ENCODE measurements at regions of chr2 and their contacts with region 1.

Region 1: GRCh38 chr2:26970244-26970920 is at the start of gene MAPRE3:
- DNase-seq: peak; percentile 60 to 78
- ATAC-seq: peak; percentile 73 to 75
- H3K4me3 ChIP-seq: peak within 1 kb of the TSS; percentile 67 to 87 (median 79)
- H3K27ac ChIP-seq: peak within 1 kb of the TSS; percentile 94 to 97 (median 96)
- H3K4me1 ChIP-seq: peaks cover 37 to 41% of the 10 kb centered on the region in 2 donors
- H3K27me3 ChIP-seq: no peaks in the 10 kb centered on the region
- CTCF ChIP-seq: no peak
- POLR2A ChIP-seq: peak; percentile 92
- total RNA-seq, gene MAPRE3: 41.9 to 66.5 (median 53.9) TPM

Region 2: DNA sequence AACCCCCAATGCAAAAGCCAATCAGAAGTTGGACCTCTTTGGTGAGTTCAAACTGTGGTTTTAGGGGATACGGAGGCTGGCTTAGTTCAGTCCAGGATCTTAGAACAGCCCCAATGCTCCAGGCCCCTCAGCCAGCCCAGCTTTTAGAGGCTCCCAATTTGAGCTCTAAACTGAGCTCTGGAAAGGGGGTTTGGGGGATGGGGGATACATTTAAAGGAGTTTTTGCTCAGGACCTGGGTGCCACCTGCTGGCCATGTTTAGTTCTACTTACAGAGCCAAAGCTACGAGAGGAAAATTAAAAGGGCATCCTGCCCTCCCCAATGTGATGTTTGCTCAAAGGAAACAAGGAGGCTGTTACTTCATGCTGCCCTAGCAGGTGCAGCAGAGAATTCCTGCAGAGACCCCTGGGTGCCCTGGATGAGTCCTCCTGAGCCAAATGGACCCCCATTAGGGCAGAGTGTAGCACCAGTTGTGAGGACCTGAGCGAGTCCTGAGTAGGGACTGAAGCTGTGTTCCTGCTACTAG is 46.5 kb after region 1 on chr2:
- in situ Hi-C with region 1: loop called in 1 of 4 experiments (anchors 5 kb)
- intact Hi-C with region 1: loop called (anchors 2 kb)
- DNase-seq: peak in 1 of 2 donors; percentile 47
- ATAC-seq: peak; percentile 26 to 52
- H3K4me3 ChIP-seq: no peak overlapping the region
- H3K27ac ChIP-seq: peak overlapping the region; percentile 65 to 81 (median 70)
- H3K4me1 ChIP-seq: peaks cover 62 to 96% of the 10 kb centered on the region in 2 donors
- H3K27me3 ChIP-seq: no peaks in the 10 kb centered on the region
- CTCF ChIP-seq: peak; percentile 72 to 89 (median 73)
- POLR2A ChIP-seq: no peak

Region 3: GRCh38 chr2:27191053-27191829 is 220.9 kb after region 1 on chr2:
- in situ Hi-C with region 1: loop called in 1 of 4 experiments (anchors 25 kb)
- intact Hi-C with region 1: no loop called
- DNase-seq: peak in 1 of 2 donors; percentile 36
- ATAC-seq: peak; percentile 80 to 82
- H3K4me3 ChIP-seq: no peak overlapping the region
- H3K27ac ChIP-seq: no peak overlapping the region
- H3K4me1 ChIP-seq: peaks cover under 1 to 15% of the 10 kb centered on the region in 2 donors
- H3K27me3 ChIP-seq: no peaks in the 10 kb centered on the region
- CTCF ChIP-seq: peak; percentile 43 to 74 (median 66)
- POLR2A ChIP-seq: no peak

Region 4: GRCh38 chr2:27217217-27218121 is 247.1 kb after region 1 on chr2 and contains the start of gene CAD:
- in situ Hi-C with region 1: loop called in 1 of 4 experiments (anchors 25 kb)
- intact Hi-C with region 1: no loop called
- DNase-seq: peak; percentile 72 to 76
- ATAC-seq: peak; percentile 63
- H3K4me3 ChIP-seq: peak within 1 kb of the TSS; percentile 57 to 65 (median 63)
- H3K27ac ChIP-seq: peak within 1 kb of the TSS; percentile 73 to 77 (median 74)
- H3K4me1 ChIP-seq: peaks cover 11 to 21% of the 10 kb centered on the region in 2 donors
- H3K27me3 ChIP-seq: no peaks in the 10 kb centered on the region
- CTCF ChIP-seq: peak in 4 of 5 experiments; percentile 10 to 34 (median 31)
- POLR2A ChIP-seq: no peak
- total RNA-seq, gene CAD: 2.7 to 10.2 (median 7.1) TPM

Region 5: DNA sequence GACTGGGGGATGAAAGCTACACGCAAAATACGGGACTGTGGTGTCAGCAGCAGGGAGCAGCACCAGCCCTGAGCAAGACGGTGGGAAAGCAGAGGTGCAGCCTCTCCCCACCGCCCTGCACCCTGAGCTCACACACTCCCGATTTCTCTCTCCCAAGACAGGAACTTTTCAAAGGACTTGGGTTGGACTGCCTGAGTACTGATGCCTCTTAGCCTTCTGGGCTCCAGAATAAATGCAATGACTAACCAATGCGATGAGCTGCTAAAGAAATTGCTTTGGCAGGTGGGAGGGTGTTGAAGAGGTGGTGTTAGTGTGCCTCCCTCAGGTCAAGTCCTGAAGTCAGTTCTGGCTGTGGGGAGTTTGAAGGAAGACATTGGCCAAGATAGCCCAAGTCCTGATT is 321.5 kb after region 1 on chr2:
- in situ Hi-C with region 1: loop called in 3 of 4 experiments (anchors 10 to 25 kb)
- intact Hi-C with region 1: no loop called
- DNase-seq: peak in 1 of 2 donors; percentile 67
- ATAC-seq: peak; percentile 66 to 82
- H3K4me3 ChIP-seq: peak overlapping the region; percentile 42 to 84 (median 66)
- H3K27ac ChIP-seq: peak overlapping the region; percentile 88 to 99 (median 98)
- H3K4me1 ChIP-seq: peaks cover 88 to 97% of the 10 kb centered on the region in 2 donors
- H3K27me3 ChIP-seq: no peaks in the 10 kb centered on the region
- CTCF ChIP-seq: peak in 3 of 5 experiments; percentile 11 to 50 (median 16)
- POLR2A ChIP-seq: peak in 1 of 2 donors; percentile 59

Region 6: DNA sequence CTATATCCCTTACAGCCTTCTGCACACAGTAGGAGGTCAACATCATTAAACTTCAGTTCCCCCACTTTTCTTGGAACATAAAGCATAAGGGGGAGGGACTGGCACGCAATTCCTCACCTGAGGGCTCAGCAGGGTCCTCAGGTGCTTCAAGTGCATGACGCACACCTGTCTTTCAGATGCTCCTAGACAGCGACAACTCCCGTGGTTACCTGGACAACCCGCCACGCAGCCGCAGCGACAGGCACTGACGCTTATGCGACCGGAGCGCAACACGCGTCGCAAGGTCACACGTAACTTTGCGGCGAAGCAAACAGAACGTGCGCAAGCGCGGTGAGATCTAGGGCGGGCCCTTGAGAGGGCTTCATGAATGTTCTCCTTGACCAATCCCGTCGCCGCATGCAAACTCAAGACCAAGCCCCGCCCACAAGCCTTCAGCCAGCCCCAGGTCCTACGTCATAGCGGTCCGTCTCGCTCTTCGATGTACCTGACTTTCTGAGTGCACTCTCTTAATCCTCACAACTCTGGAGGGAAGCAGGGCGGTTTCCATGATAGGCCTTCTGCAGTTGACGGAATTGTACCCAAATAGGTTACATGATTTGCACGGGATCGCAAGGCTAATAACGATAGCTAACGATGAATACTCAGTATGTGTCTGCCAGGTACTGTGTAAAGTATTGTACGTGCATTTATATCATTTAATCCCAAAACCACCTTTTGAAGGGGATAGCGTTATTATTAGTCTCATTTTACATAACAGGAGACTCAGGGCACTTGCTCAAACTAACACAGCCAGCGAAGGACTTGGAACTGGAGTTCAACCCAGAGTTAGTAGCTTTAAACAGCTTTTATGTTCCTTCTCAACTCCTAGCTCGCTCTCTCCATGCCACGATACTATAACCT is 519.4 kb after region 1 on chr2 and contains the start of gene IFT172:
- in situ Hi-C with region 1: no loop called
- intact Hi-C with region 1: no loop called
- DNase-seq: peak; percentile 99
- ATAC-seq: peak; percentile 99
- H3K4me3 ChIP-seq: peak within 1 kb of the TSS; percentile 69 to 83 (median 77)
- H3K27ac ChIP-seq: peak within 1 kb of the TSS; percentile 75 to 85 (median 83)
- H3K4me1 ChIP-seq: peaks cover 13 to 25% of the 10 kb centered on the region in 2 donors
- H3K27me3 ChIP-seq: peaks cover 0 to 7% (median 0%) of the 10 kb centered on the region in 3 donors
- CTCF ChIP-seq: no peak
- POLR2A ChIP-seq: peak; percentile 48 to 76
- total RNA-seq, gene IFT172: 3.1 to 16.8 (median 8.6) TPM

Measured in gastrocnemius medialis (tissue), 4 donors.